BJ (cell line): ENCODE measurements at regions of chr2 and their contacts with region 1.

Region 1: DNA sequence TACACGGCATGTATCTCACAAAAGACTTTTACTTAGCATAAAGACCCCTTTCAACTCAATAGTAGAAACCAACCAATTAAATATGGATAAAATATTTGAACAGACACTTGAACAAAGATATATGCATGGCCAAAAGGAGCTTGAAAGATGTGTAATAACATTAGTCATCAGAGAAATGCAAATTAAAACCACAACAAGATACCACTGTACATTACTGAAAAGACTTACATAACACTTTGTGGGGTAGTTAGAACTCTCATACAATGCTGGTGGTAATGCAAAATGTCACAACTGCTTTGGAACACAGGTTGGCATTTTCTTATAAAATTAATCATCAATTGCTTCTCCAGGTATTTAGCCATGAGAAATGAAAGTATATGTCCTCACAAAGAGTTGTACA is 60.7 kb downstream of the TTC27 start:
- DNase-seq: no peak
- H3K4me3 ChIP-seq: no peak overlapping the region
- H3K27me3 ChIP-seq: no peaks in the 10 kb centered on the region
- CTCF ChIP-seq: no peak

Region 2: DNA sequence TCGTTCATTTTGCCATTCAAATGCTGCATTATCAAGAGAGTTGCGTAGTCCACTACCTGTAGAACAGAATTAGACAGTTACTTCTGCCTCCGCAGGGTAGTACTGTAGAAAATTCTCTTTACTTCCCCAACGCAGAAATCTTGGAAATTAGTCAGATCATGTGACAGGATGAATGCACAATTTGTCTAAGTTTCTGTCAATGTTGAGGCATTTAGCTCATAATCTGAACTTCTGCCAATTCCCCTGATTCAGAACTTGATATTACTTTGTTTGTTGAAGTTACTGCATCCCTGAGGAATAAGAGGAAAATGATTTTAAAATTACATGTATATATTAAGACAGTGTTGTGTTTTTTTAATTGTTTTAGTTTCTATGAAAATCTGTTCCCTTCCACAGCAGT is 22.7 kb after region 1 on chr2:
- CTCF ChIA-PET with region 1: no interaction called
- POLR2A ChIA-PET with region 1: interaction called, 14 read pairs
- DNase-seq: no peak
- H3K4me3 ChIP-seq: no peak overlapping the region
- H3K27me3 ChIP-seq: no peaks in the 10 kb centered on the region
- CTCF ChIP-seq: no peak

Region 3: GRCh38 chr2:32743480-32744236 is 55.1 kb after region 1 on chr2:
- CTCF ChIA-PET with region 1: no interaction called
- POLR2A ChIA-PET with region 1: no interaction called
- DNase-seq: no peak
- H3K4me3 ChIP-seq: no peak overlapping the region
- H3K27me3 ChIP-seq: no peaks in the 10 kb centered on the region
- CTCF ChIP-seq: no peak

Region 4: DNA sequence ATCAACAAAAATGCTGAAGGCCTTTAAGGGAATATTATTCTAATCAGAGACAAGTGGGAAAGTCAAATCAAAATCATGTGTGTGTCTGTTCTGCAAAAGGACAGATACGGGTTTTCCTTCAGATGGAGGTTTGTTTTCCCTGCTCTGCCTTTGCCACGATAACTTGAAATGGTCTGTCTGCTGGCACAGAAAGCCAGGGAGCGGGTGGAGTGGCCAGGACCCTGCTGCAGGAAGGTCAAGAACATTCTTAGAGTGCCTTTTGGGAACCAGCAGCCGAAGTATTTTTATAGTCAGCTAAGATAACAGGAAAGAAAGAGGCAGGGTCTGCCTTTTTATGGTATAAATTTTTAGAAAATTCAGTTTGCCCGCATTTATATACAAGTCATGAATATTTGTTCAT is 492.4 kb after region 1 on chr2:
- CTCF ChIA-PET with region 1: no interaction called
- POLR2A ChIA-PET with region 1: no interaction called
- DNase-seq: no peak
- H3K4me3 ChIP-seq: no peak overlapping the region
- H3K27me3 ChIP-seq: no peaks in the 10 kb centered on the region
- CTCF ChIP-seq: no peak

Region 5: DNA sequence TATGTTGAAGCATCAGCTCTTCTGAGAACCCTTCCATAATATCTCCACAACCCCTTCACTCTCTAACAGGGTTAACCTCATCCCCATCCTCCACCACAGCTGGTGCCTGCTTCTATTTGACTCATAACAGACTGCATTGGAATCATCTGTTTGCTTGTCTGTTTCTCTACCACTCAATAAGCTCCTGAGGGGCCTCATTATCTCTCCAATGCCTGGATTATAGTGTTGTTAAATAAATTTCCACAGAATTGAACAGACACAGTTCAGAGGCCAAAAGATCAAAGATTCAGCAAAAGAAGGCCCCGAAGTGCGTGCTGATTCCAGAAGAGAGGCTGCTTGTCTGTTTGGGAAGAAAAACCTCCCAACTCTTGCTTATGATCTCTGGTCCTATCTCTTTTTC is 944.3 kb after region 1 on chr2:
- CTCF ChIA-PET with region 1: no interaction called
- POLR2A ChIA-PET with region 1: no interaction called
- DNase-seq: no peak
- H3K4me3 ChIP-seq: no peak overlapping the region
- H3K27me3 ChIP-seq: no peaks in the 10 kb centered on the region
- CTCF ChIP-seq: no peak